ENCODE measurements at regions of chr6 and their contacts with region 1.

Region 1: DNA sequence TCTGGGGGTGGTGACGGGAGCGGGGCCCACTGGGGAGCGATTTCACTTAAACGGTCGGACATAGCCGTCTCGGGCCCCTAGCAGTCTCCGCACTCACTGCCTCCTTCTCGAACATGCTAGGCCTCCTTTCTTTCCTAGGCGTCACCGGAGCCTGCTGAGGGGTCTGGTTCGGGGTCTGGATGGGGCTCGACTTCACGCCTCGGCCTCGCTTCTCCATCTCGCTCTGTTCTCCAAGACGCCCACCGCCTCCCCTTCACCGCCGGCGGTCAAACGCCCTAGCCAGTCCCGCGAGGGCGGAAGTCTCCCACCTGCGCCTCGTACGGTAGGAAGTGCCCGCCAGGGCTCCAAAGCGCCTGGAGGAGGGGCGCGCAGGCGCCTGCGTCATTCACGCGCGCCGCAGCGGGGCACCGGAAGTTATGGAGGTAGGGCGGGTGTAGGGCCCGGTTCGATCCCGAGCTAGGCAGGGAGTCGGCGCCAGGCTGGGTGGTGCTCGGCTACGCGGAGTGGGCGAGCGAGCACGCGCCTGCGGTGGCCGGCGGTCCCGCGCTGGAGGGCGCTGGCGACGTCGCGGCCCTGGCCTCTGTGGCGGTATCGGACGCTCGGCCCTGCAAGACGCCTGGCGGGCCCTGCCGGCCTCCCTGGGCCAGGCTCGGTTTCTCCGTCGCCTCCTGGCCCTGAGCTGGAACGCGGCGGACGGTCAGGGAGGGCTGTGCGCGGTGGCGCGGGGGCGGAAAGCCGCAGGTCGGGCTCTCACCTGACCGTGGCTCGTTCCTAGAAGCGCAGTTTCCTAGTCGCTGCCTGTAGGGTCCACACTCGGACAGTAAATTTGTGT is at the starts of genes DYNLT2 and ERMARD:
- DNase-seq: peak; percentile 97
- H3K4me3 ChIP-seq: peak within 1 kb of the TSS; percentile 85 to 97 (median 93)
- H3K27ac ChIP-seq: peak within 1 kb of the TSS; percentile 97 to 98 (median 98)
- H3K4me1 ChIP-seq: peaks cover 19 to 28% (median 26%) of the 10 kb centered on the region in 4 donors
- H3K27me3 ChIP-seq: no peaks in the 10 kb centered on the region
- CTCF ChIP-seq: peak in 2 of 3 experiments; percentile 27 to 31
- EP300 ChIP-seq: no peak
- POLR2A ChIP-seq: peak; percentile 85
- total RNA-seq, gene DYNLT2: 0.57 to 3.3 (median 1.5) TPM
- total RNA-seq, gene ERMARD: 9.6 to 13.3 (median 12.4) TPM

Region 2: GRCh38 chr6:169420912-169421543 is 330.4 kb before region 1 on chr6:
- intact Hi-C with region 1: no loop called
- DNase-seq: no peak
- H3K4me3 ChIP-seq: no peak overlapping the region
- H3K27ac ChIP-seq: no peak overlapping the region
- H3K4me1 ChIP-seq: peaks cover 0 to 8% (median 0%) of the 10 kb centered on the region in 4 donors
- H3K27me3 ChIP-seq: no peaks in the 10 kb centered on the region
- CTCF ChIP-seq: peak; percentile 33 to 42 (median 35)
- EP300 ChIP-seq: no peak
- POLR2A ChIP-seq: no peak

Region 3: DNA sequence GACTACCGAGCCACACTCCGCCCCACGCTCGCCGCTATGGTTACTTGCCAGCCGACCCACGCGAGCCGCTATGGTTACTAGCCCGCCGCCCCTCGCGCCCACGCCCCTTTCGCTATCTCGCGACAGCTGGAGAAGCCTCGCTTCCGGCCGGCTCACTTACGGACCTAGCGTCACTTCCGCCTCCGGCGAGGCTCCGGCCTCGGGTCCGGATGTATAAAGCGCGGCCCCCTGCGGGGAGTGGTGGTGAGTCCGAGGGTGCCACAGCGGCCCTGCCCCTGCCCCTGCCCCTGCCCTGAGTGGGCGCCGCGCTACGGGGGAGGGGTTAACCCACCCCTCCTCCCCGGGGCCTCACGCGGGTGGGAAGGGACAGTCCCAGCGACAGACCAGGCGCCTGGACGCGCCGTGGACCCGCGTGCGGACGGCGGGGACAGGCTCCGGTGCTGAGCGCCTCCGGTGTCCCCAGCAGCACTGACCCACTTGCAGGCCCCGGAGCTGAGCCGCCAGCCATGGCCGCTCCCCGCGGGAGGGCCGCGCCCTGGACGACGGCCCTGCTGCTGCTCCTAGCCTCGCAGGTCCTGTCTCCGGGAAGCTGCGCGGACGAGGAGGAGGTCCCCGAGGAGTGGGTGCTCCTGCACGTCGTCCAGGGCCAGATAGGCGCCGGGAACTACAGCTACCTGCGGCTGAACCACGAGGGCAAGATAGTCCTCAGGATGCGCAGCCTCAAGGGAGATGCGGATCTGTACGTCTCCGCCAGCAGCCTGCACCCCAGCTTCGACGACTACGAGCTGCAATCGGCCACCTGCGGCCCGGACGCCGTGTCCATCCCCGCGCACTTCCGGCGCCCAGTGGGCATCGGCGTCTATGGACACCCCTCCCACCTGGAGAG is 49.3 kb before region 1 on chr6 and contains the starts of genes C6orf120 and WDR27:
- intact Hi-C with region 1: loop called (anchors 2 kb)
- DNase-seq: peak; percentile 99
- H3K4me3 ChIP-seq: peak within 1 kb of the TSS; percentile 83 to 99 (median 96)
- H3K27ac ChIP-seq: peak within 1 kb of the TSS; percentile 96 to 99 (median 96)
- H3K4me1 ChIP-seq: peaks cover 30 to 63% (median 48%) of the 10 kb centered on the region in 4 donors
- H3K27me3 ChIP-seq: no peaks in the 10 kb centered on the region
- CTCF ChIP-seq: peak in 1 of 3 experiments; percentile 15
- EP300 ChIP-seq: no peak
- POLR2A ChIP-seq: peak; percentile 82
- total RNA-seq, gene C6orf120: 25.3 to 35.6 (median 31.2) TPM
- total RNA-seq, gene WDR27: 9.3 to 18.4 (median 14.4) TPM

Region 4: GRCh38 chr6:169723200-169723909 is 28.1 kb before region 1 on chr6:
- intact Hi-C with region 1: loop called (anchors 2 kb)
- DNase-seq: peak; percentile 93
- H3K4me3 ChIP-seq: peak overlapping the region; percentile 67 to 93 (median 86)
- H3K27ac ChIP-seq: peak overlapping the region; percentile 93 to 95 (median 94)
- H3K4me1 ChIP-seq: peaks cover 26 to 56% (median 40%) of the 10 kb centered on the region in 4 donors
- H3K27me3 ChIP-seq: no peaks in the 10 kb centered on the region
- CTCF ChIP-seq: no peak
- EP300 ChIP-seq: no peak
- POLR2A ChIP-seq: no peak

Region 5: GRCh38 chr6:170554013-170554795 is 802.7 kb after region 1 on chr6 and contains the start of gene TBP:
- intact Hi-C with region 1: loop called (anchors 5 kb)
- DNase-seq: peak; percentile 98
- H3K4me3 ChIP-seq: peak within 1 kb of the TSS; percentile 82 to 92 (median 86)
- H3K27ac ChIP-seq: peak within 1 kb of the TSS; percentile 86 to 93 (median 91)
- H3K4me1 ChIP-seq: peaks cover 42 to 68% (median 52%) of the 10 kb centered on the region in 4 donors
- H3K27me3 ChIP-seq: no peaks in the 10 kb centered on the region
- CTCF ChIP-seq: peak in 1 of 3 experiments; percentile 11
- EP300 ChIP-seq: no peak
- POLR2A ChIP-seq: no peak
- total RNA-seq, gene TBP: 13.1 to 17.8 (median 16.7) TPM